MCF 10A (cell line): ENCODE measurements at regions of chr16 and their contacts with region 1.

Region 1: GRCh38 chr16:87806603-87807546 is 41.1 kb upstream of the KLHDC4 start:
- DNase-seq: peak; percentile 99
- H3K4me3 Mint-ChIP-seq: peak overlapping the region; percentile 87
- H3K27ac Mint-ChIP-seq: peak overlapping the region; percentile 96
- H3K4me1 Mint-ChIP-seq: peaks cover 37% of the 10 kb centered on the region
- H3K27me3 Mint-ChIP-seq: no peaks in the 10 kb centered on the region
- CTCF ChIP-seq: no peak

Region 2: GRCh38 chr16:87765776-87766484 is 40.9 kb before region 1 on chr16 and contains the start of gene KLHDC4:
- CTCF ChIA-PET with region 1: no interaction called
- POLR2A ChIA-PET with region 1: interaction called, 14 read pairs
- intact Hi-C with region 1: no loop called
- DNase-seq: peak; percentile 84
- H3K4me3 Mint-ChIP-seq: peak within 1 kb of the TSS; percentile 88
- H3K27ac Mint-ChIP-seq: peak within 1 kb of the TSS; percentile 95
- H3K4me1 Mint-ChIP-seq: peaks cover 24% of the 10 kb centered on the region
- H3K27me3 Mint-ChIP-seq: no peaks in the 10 kb centered on the region
- CTCF ChIP-seq: no peak
- total RNA-seq, gene KLHDC4: 82.9 and 106 TPM in 2 replicates

Region 3: DNA sequence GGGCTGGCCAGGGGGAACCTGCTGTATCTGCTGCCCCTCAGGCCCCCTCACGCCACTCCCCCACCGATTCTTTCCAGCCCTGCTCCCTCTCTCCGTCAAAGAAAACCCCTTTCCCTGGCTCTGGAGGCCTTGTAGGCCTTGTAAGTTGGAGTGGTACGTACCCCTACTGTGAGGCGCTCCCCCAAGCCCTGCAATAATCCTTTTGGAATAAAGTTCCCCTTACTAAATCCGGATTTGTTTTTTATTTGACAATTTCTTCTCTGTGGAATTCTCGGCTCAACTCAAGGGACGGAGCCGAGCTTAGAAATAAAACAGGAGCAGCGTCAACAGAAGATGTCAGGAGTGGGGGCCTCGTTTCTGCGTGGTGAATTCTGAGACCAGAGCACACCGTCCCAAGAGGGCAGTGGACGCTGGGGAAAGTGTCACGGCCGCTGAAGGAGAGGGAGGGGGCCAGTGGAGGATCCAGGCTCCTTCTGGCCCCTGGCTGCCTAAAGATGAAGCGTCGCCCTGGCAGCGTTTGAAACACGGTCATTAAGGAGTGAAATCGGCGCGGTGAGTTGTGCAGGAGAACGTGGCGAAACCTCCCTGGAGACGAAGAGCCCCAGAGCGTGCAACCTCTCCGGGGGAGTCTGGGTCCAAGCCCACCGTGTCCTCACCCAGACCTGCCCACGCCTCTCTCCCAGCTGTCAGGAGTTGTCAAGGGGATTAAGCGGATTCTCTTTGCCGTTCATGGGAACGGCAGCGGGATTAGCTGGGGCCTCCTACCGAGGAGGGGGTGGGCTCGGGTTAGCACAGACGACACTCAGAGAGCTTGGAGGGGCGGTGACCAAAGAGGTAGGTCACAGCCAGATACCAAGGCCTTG is 15.5 kb after region 1 on chr16:
- CTCF ChIA-PET with region 1: interaction called, 4 read pairs
- POLR2A ChIA-PET with region 1: interaction called, 65 read pairs
- intact Hi-C with region 1: no loop called
- DNase-seq: no peak
- H3K4me3 Mint-ChIP-seq: no peak overlapping the region
- H3K27ac Mint-ChIP-seq: peak overlapping the region; percentile 35
- H3K4me1 Mint-ChIP-seq: peaks cover 13% of the 10 kb centered on the region
- H3K27me3 Mint-ChIP-seq: no peaks in the 10 kb centered on the region
- CTCF ChIP-seq: no peak

Region 4: DNA sequence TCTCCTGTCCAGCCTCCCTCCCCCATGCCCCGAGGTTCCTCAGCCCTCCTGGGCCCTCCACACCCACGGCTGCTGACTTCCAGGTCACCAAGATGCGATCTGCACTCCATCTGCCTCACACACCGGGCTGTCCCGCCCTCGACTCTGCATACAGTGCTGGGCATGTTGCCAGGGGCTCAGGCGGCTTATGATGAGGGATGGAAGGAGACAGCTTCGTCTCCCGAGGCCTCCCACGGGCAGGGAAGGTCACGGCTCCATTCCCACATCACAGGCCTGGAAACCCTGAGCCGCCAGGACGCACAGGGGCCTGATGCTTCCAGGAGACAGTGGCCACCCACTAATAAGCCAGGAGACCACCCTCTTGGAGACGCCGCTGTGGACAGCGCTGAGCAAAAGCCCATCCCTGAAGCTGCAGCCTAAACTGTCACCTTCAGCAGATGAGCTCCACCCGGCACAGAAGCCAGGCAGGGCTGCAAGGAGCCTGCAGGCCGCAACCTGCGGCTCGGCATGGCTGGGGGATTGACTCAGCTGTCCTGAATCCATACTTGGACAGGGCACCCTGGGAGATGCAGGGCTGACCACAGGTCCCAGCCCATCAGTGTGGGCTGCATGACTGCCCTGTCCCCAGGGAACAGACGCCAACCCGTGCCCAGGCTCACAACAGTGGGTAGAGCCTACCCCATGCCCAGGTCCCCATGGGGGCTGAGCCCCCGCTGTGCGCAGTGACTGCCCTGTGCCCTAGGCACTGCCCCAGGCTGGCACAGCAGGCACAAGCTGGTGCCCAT is 27.9 kb after region 1 on chr16:
- CTCF ChIA-PET with region 1: interaction called, 4 read pairs
- POLR2A ChIA-PET with region 1: interaction called, 18 read pairs
- intact Hi-C with region 1: no loop called
- DNase-seq: peak; percentile 50
- H3K4me3 Mint-ChIP-seq: no peak overlapping the region
- H3K27ac Mint-ChIP-seq: no peak overlapping the region
- H3K4me1 Mint-ChIP-seq: no peaks in the 10 kb centered on the region
- H3K27me3 Mint-ChIP-seq: no peaks in the 10 kb centered on the region
- CTCF ChIP-seq: no peak

Region 5: DNA sequence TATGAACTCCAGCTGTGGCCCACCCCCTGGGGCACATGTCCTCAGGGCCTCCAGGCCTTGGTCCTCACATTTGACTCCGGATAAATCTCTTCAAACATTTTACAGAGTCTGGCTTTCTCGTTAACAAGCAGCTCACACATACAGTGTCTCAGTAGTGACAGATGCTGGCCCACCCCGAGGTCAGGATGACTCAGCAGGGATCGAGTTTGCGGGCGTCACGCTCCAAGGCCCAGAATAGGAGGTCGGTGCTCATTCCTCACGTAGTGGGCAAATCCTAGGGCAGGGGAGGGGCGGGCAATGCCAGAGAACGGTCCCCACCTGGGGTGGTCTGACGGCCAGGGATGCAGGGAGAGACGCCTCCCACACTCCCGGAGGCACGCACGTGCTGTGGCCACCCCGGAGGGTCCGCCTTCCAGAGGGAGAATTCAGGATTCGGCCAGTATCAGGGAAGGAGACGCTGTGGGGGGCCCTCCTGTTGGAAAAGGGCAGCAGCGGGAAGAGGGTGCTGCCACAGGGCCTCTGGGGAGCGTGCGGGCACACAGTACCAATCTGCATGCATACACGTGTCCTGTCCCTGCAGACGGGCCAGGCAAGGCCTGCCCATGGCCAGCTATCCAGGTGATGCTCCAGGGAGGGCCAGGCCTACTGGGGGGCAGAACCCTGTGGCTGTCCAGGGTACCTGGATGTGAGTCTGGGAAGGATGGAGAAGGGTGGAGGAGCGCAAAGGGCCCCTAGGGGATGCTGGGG is 53.9 kb after region 1 on chr16:
- CTCF ChIA-PET with region 1: interaction called, 7 read pairs
- POLR2A ChIA-PET with region 1: interaction called, 32 read pairs
- intact Hi-C with region 1: no loop called
- DNase-seq: peak; percentile 72
- H3K4me3 Mint-ChIP-seq: peak overlapping the region; percentile 67
- H3K27ac Mint-ChIP-seq: peak overlapping the region; percentile 75
- H3K4me1 Mint-ChIP-seq: peaks cover 38% of the 10 kb centered on the region
- H3K27me3 Mint-ChIP-seq: no peaks in the 10 kb centered on the region
- CTCF ChIP-seq: no peak